Activated B cell treated with CpG ODN at 0.5 μM for 24 hours (primary cell): ENCODE measurements at regions of chr9 and their contacts with region 1.

Region 1: GRCh38 chr9:113221003-113221799 is at the starts of genes FKBP15 and SLC31A1:
- DNase-seq: peak; percentile 94
- ATAC-seq: peak; percentile 95
- H3K4me3 Mint-ChIP-seq: peak within 1 kb of the TSS; percentile 96
- H3K27ac Mint-ChIP-seq: peak within 1 kb of the TSS; percentile 94
- H3K4me1 Mint-ChIP-seq: peaks cover 49% of the 10 kb centered on the region
- H3K27me3 Mint-ChIP-seq: no peaks in the 10 kb centered on the region
- CTCF ChIP-seq: no peak
- total RNA-seq, gene FKBP15: 48.3 and 49.1 TPM in 2 replicates
- total RNA-seq, gene SLC31A1: 5.7 and 7.3 TPM in 2 replicates

Region 2: GRCh38 chr9:112486221-112487007 is 734.8 kb before region 1 on chr9 and contains the start of gene KIAA1958:
- CTCF ChIA-PET with region 1: no interaction called
- POLR2A ChIA-PET with region 1: no interaction called
- intact Hi-C with region 1: loop called (anchors 2 kb)
- DNase-seq: peak; percentile 75
- ATAC-seq: peak; percentile 89
- H3K4me3 Mint-ChIP-seq: peak within 1 kb of the TSS; percentile 97
- H3K27ac Mint-ChIP-seq: peak within 1 kb of the TSS; percentile 89
- H3K4me1 Mint-ChIP-seq: peaks cover 19% of the 10 kb centered on the region
- H3K27me3 Mint-ChIP-seq: no peaks in the 10 kb centered on the region
- CTCF ChIP-seq: no peak
- total RNA-seq, gene KIAA1958: 5.8 and 7.4 TPM in 2 replicates

Region 3: DNA sequence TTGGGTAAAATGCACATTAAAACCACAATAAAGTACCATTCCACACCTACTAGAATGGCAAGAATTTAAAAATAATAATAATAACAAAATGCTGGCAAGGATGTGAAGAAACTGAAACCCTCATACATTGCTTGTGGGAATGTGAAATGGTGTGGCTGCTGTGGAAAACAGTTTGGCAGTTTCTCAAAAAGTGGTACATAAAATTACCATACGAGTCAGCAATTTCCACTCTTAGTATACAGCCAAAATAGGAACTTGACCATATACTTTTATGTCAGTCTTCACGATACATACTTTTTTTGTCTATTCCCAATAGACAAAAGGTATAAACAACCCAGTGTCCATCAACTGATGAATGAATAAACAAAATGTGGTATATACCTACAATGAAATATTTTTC is 15.8 kb before region 1 on chr9:
- CTCF ChIA-PET with region 1: interaction called, 3 read pairs
- POLR2A ChIA-PET with region 1: interaction called, 10 read pairs
- intact Hi-C with region 1: no loop called
- DNase-seq: no peak
- ATAC-seq: no peak
- H3K4me3 Mint-ChIP-seq: no peak overlapping the region
- H3K27ac Mint-ChIP-seq: no peak overlapping the region
- H3K4me1 Mint-ChIP-seq: peaks cover 5% of the 10 kb centered on the region
- H3K27me3 Mint-ChIP-seq: no peaks in the 10 kb centered on the region
- CTCF ChIP-seq: no peak

Region 4: DNA sequence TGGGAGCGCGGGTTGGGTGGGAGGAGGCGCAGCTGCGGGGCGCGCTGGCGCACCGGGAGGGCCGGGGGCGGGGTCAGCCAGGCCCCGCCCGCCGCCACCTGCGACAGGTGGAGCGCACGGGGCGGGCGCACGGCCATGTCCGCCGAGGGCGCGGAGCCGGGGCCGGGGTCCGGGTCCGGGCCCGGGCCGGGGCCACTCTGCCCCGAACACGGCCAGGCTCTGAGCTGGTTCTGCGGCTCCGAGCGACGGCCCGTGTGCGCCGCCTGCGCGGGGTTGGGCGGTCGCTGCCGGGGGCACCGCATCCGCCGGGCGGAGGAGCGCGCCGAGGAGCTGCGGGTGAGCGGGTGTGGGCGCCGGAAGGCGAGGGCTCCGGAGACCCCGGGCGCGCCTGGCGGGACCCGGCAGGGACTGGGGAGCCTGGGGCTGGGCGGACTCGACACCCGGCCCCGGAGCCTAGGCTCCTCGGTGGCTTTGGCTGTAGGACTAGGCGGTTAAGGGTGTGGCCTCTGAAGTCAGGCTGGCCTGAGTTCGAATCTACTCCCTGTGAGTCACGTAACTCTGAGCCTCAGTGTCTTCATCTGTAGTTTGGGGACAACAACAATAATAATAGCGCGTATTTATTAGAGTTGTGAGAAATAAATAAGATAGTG is 128.4 kb after region 1 on chr9 and contains the start of gene BSPRY:
- CTCF ChIA-PET with region 1: no interaction called
- POLR2A ChIA-PET with region 1: no interaction called
- intact Hi-C with region 1: loop called (anchors 2 kb)
- DNase-seq: peak; percentile 39
- ATAC-seq: peak; percentile 59
- H3K4me3 Mint-ChIP-seq: peak within 1 kb of the TSS; percentile 82
- H3K27ac Mint-ChIP-seq: peak within 1 kb of the TSS; percentile 30
- H3K4me1 Mint-ChIP-seq: peaks cover 20% of the 10 kb centered on the region
- H3K27me3 Mint-ChIP-seq: peaks cover 7% of the 10 kb centered on the region
- CTCF ChIP-seq: no peak
- total RNA-seq, gene BSPRY: 1.1 and 1.3 TPM in 2 replicates

Region 5: GRCh38 chr9:113401027-113401792 is 180.0 kb after region 1 on chr9 and contains the start of gene ALAD:
- CTCF ChIA-PET with region 1: no interaction called
- POLR2A ChIA-PET with region 1: interaction called, 3 read pairs
- intact Hi-C with region 1: loop called (anchors 1 kb)
- DNase-seq: peak; percentile 99
- ATAC-seq: peak; percentile 99
- H3K4me3 Mint-ChIP-seq: peak within 1 kb of the TSS; percentile 96
- H3K27ac Mint-ChIP-seq: peak within 1 kb of the TSS; percentile 87
- H3K4me1 Mint-ChIP-seq: peaks cover 17% of the 10 kb centered on the region
- H3K27me3 Mint-ChIP-seq: no peaks in the 10 kb centered on the region
- CTCF ChIP-seq: no peak
- total RNA-seq, gene ALAD: 24.0 and 24.3 TPM in 2 replicates